GM12878 (cell line): ENCODE measurements at regions of chr12 and their contacts with region 1.

Region 1: DNA sequence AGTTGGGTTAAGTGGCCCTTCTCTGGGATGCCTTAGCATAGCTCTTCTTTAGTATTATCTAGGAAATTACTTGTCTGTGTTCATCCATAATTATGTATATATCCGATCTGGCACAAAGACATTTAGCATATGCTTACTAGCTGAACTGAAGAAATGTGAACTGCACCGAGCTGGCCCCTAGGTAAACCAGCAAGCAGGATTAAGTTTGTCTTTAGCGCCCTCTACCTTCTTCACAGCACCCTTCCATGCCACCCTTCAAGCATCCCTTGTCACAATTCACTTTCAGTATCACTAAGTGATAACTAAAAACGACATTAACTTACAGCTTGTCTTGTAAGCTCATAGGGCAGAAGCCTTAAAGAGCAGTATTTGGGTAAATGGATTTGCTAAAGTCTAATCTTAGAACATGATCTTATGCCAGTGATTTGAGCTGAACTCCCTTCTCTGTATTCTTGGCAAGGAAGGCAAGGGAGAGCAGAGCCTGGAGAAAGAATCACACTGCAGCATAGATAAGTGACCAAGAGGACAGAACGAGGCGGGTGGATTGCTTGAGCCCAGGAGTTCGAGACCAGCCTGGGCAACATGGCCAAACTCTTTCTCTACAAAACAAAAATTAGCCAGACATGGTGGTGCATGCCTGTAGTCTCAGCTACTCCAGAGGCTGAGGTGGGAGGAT is 2.6 kb upstream of the HAL start:
- DNase-seq: peak; percentile 34
- ATAC-seq: peak; percentile 99
- H3K4me3 ChIP-seq: no peak overlapping the region
- H3K27ac ChIP-seq: no peak overlapping the region
- H3K4me1 ChIP-seq: no peaks in the 10 kb centered on the region
- H3K27me3 ChIP-seq: no peaks in the 10 kb centered on the region
- CTCF ChIP-seq: peak; percentile 69 to 79 (median 73); a peak in 5 of 6 replicates
- EP300 ChIP-seq: no peak
- POLR2A ChIP-seq: no peak
- RAD21 ChIP-seq: peak; percentile 69

Region 2: DNA sequence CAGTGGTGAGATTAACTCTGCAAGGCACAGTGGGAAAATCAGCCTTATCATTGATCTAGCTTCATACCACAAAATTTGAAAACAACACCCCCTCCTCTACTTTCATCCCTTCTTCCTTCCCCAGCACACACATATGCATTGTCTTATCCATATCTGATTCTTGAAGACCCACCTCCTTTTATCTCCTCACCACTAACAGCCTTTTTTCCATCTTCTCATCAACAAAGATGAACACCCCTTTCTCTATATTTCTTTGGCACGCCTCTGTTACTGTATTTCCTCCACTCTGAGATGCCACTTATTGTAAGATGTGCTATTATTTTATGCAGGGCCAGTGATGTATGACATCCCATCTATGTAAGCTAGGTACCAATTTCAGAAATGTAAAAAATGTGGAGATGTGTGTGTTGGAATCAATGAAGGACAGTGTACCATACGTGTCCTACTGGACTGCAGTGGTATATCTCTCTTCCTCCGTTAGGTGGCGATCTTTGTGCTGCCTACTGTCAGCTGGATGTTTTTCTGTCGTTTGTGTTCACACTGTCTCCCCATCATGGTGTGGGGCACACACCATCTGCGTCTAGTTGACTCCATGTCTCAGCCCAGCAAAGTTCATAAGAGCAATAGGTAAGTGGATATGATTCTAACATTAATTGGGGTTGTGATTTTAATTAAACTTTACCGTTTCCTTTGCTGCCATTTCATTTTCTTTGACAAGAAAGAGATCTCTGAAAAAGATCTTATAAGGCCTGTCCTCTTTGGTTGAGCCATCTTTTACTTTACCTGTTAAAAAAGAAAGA is 80.4 kb before region 1 on chr12:
- CTCF ChIA-PET with region 1: interaction called, 116 read pairs
- POLR2A ChIA-PET with region 1: no interaction called
- RAD21 ChIA-PET with region 1: interaction called, 39 read pairs
- SMC1A ChIA-PET with region 1: interaction called, 51 read pairs
- in situ Hi-C with region 1: no loop called
- intact Hi-C with region 1: loop called (anchors 1 kb)
- DNase-seq: no peak
- ATAC-seq: peak; percentile 99
- H3K4me3 ChIP-seq: no peak overlapping the region
- H3K27ac ChIP-seq: no peak overlapping the region
- H3K4me1 ChIP-seq: no peaks in the 10 kb centered on the region
- H3K27me3 ChIP-seq: peaks cover 2 to 3% of the 10 kb centered on the region in 2 experiments; a peak in 3 of 4 replicates
- CTCF ChIP-seq: peak; percentile 77 to 84 (median 80)
- EP300 ChIP-seq: no peak
- POLR2A ChIP-seq: no peak
- RAD21 ChIP-seq: peak; percentile 74

Region 3: DNA sequence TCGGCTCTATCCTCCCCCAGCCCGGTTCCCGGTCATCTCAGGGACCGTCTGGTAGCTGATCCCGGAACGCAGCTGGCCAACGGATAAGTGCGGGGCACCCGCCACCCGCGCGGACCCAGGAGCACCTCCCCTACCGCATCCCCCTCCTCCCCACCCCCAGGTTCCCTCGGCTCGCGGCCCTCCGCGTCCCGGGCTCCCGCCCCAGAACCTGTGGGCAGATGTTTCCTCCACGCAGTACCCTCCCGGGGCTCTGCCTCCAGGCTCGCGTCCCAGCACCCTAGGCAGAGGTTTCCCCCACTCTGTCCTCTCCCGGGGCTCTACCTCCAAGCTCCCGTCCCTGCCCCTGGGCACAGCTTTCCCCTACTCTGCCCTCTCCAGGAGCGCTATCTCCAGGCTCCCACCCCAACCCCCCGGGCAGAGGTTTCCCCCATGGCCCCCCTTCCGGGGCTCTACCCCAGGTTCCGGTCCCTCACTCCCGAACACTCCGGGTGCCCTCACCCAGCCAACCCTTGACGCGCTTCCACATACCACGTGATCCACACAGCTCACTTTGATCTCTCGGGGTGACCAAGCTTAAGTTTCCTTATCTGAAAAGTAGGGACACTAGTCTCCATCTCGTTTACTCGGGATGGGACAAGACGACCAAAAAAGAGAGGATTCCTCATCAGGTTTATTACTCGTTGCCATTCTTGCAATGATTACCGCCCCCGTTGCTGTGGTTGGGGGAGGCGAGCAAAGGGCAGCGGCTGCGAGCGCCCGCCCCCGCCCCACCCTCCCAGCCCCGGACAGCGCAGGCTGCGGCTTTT is 56.0 kb before region 1 on chr12 and contains the start of gene CCDC38:
- CTCF ChIA-PET with region 1: interaction called, 13 read pairs
- POLR2A ChIA-PET with region 1: no interaction called
- RAD21 ChIA-PET with region 1: interaction called, 6 read pairs
- SMC1A ChIA-PET with region 1: interaction called, 6 read pairs
- in situ Hi-C with region 1: no loop called
- intact Hi-C with region 1: no loop called
- DNase-seq: peak; percentile 57
- ATAC-seq: peak; percentile 98
- H3K4me3 ChIP-seq: peak within 1 kb of the TSS; percentile 94
- H3K27ac ChIP-seq: peak within 1 kb of the TSS; percentile 53
- H3K4me1 ChIP-seq: peaks cover 3% of the 10 kb centered on the region; the same call in 1 of the 2 replicates
- H3K27me3 ChIP-seq: no peaks in the 10 kb centered on the region
- CTCF ChIP-seq: no peak
- EP300 ChIP-seq: no peak
- POLR2A ChIP-seq: peak; percentile 78
- RAD21 ChIP-seq: no peak
- polyA plus RNA-seq, gene CCDC38: not detected

Region 4: GRCh38 chr12:95959107-95959506 is 39.6 kb before region 1 on chr12:
- CTCF ChIA-PET with region 1: interaction called, 19 read pairs
- POLR2A ChIA-PET with region 1: no interaction called
- RAD21 ChIA-PET with region 1: interaction called, 9 read pairs
- SMC1A ChIA-PET with region 1: interaction called, 5 read pairs
- in situ Hi-C with region 1: no loop called
- intact Hi-C with region 1: no loop called
- DNase-seq: no peak
- ATAC-seq: no peak
- H3K4me3 ChIP-seq: no peak overlapping the region
- H3K27ac ChIP-seq: no peak overlapping the region
- H3K4me1 ChIP-seq: no peaks in the 10 kb centered on the region
- H3K27me3 ChIP-seq: no peaks in the 10 kb centered on the region
- CTCF ChIP-seq: peak in 1 of 3 experiments; percentile 9; a peak in 1 of 6 replicates
- EP300 ChIP-seq: no peak
- POLR2A ChIP-seq: no peak
- RAD21 ChIP-seq: peak; percentile 36

Region 5: DNA sequence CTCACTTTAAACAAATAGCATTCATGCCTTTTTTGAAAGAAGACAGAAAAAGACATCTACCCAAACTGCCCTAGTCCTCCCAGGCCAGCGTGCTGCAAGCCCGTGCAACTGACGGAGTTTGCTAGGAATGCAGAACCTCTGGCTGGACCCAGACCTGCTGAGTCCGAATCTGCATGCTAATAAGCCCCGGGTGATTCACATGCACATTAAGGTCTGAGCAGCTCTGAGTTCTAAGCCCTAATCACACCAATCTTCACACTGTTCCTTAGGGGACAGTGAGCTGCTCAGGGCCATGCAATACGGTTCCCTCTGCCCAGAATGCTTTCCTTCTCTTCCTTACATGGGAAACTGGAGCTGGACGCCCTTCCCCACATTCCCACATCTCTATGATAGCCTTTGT is 27.8 kb before region 1 on chr12:
- CTCF ChIA-PET with region 1: interaction called, 10 read pairs
- POLR2A ChIA-PET with region 1: no interaction called
- RAD21 ChIA-PET with region 1: no interaction called
- SMC1A ChIA-PET with region 1: interaction called, 3 read pairs
- in situ Hi-C with region 1: no loop called
- intact Hi-C with region 1: no loop called
- DNase-seq: no peak
- ATAC-seq: no peak
- H3K4me3 ChIP-seq: no peak overlapping the region
- H3K27ac ChIP-seq: no peak overlapping the region
- H3K4me1 ChIP-seq: no peaks in the 10 kb centered on the region
- H3K27me3 ChIP-seq: no peaks in the 10 kb centered on the region
- CTCF ChIP-seq: no peak
- EP300 ChIP-seq: no peak
- POLR2A ChIP-seq: no peak
- RAD21 ChIP-seq: no peak

Region 6: GRCh38 chr12:96020314-96021003 is 21.7 kb after region 1 on chr12:
- CTCF ChIA-PET with region 1: interaction called, 16 read pairs
- POLR2A ChIA-PET with region 1: interaction called, 6 read pairs
- RAD21 ChIA-PET with region 1: interaction called, 5 read pairs
- SMC1A ChIA-PET with region 1: interaction called, 4 read pairs
- in situ Hi-C with region 1: no loop called
- intact Hi-C with region 1: no loop called
- DNase-seq: peak; percentile 19
- ATAC-seq: peak; percentile 100
- H3K4me3 ChIP-seq: no peak overlapping the region
- H3K27ac ChIP-seq: peak overlapping the region; percentile 46; the same call in 1 of the 2 replicates
- H3K4me1 ChIP-seq: peaks cover 15% of the 10 kb centered on the region
- H3K27me3 ChIP-seq: no peaks in the 10 kb centered on the region
- CTCF ChIP-seq: no peak
- EP300 ChIP-seq: peak in 1 of 2 experiments; percentile 91; a peak in 2 of 4 replicates
- POLR2A ChIP-seq: no peak
- RAD21 ChIP-seq: no peak

Region 7: DNA sequence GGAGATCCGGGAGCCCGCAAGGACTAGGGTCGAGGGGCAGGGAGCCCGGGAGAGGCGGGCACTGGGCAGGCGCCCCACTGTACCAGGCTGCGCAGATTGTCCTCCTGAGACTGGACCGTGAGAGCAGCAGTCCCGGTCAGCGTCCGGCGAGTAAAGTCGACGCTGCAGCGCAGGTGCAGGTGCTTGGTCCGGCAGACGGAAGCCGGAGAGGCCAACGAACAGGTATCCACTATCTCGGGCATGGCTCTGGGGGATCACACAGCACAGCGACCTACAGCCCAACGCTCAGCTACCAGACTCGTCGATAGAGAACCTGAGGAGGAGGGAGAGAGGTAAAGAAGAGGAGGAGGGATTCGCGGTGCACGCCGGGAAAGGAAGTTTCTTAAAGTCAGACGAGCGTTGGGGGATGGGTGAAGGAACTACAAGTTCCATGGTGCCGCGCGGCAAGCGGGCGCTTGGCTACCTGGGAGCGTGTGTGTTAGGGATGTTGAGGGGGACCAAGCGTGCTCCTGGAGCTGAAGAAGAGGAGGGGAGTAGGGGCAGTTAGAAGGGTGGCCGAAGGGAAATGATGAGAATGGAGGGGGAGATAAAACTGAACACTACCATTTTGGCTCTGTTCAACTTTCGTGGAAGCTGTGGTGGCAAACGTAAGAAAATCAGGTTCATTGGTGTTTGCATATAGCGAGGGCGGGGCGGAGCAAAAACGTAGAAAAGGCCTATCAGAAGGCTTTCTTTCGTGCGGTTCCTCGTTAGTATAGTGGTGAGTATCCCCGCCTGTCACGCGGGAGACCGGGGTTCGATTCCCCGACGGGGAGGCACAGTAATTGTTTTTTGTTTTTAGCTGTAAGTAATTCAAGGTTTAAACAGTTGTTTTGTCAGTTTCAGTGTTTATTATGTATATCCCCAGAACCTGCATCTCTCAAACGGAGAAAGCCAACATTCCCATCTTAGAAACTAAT is 36.8 kb after region 1 on chr12 and contains the start of gene LTA4H:
- CTCF ChIA-PET with region 1: interaction called, 14 read pairs
- POLR2A ChIA-PET with region 1: no interaction called
- RAD21 ChIA-PET with region 1: interaction called, 5 read pairs
- SMC1A ChIA-PET with region 1: interaction called, 4 read pairs
- in situ Hi-C with region 1: no loop called
- intact Hi-C with region 1: no loop called
- DNase-seq: peak; percentile 97
- ATAC-seq: peak; percentile 93
- H3K4me3 ChIP-seq: peak within 1 kb of the TSS; percentile 77
- H3K27ac ChIP-seq: peak within 1 kb of the TSS; percentile 38; the same call in 1 of the 2 replicates
- H3K4me1 ChIP-seq: peaks cover 4% of the 10 kb centered on the region; the same call in 1 of the 2 replicates
- H3K27me3 ChIP-seq: no peaks in the 10 kb centered on the region
- CTCF ChIP-seq: no peak
- EP300 ChIP-seq: no peak; a peak in 1 of 4 replicates
- POLR2A ChIP-seq: peak; percentile 95
- RAD21 ChIP-seq: no peak
- polyA plus RNA-seq, gene LTA4H: 47.2 to 47.4 TPM

Region 8: DNA sequence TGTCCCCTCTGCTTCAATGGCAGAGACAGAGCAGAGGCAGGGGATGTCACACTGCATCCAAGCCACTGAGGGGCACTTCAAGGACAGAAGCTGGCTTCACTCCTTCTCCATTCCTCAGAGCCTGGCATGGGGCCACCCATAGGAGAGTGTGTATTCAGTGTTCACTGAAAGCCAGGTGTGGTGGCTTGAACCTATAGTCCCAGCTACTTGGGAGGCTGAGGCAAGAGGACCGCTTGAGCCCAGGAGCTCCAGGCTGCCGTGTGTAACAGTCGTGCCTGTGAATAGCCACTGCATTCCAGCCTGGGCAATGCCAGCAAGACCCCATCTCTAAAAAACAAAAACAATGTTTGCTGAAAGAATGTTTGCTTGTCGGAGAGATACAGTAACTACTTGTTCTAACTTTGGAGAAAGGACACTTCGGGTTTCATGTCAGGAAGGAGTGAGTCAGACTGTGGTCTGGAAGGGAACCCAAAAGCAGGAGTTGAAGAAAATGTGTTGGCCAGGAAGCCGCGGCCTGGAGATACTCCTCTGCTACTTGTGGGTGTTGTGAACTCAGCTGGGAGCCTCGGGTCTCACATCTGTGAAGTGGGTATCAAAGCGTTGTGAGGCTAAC is 238.8 kb after region 1 on chr12:
- CTCF ChIA-PET with region 1: no interaction called
- POLR2A ChIA-PET with region 1: no interaction called
- RAD21 ChIA-PET with region 1: no interaction called
- SMC1A ChIA-PET with region 1: no interaction called
- in situ Hi-C with region 1: no loop called
- intact Hi-C with region 1: no loop called
- DNase-seq: no peak
- ATAC-seq: peak; percentile 16; the same call in 1 of the 3 replicates
- H3K4me3 ChIP-seq: no peak overlapping the region
- H3K27ac ChIP-seq: no peak overlapping the region
- H3K4me1 ChIP-seq: no peaks in the 10 kb centered on the region
- H3K27me3 ChIP-seq: no peaks in the 10 kb centered on the region
- CTCF ChIP-seq: no peak
- EP300 ChIP-seq: no peak
- POLR2A ChIP-seq: no peak
- RAD21 ChIP-seq: no peak